HepG2 (cell line): ENCODE measurements at regions of chr15 and their contacts with region 1.

Region 1: GRCh38 chr15:61621146-61621545 is 392.0 kb upstream of the RORA start:
- DNase-seq: peak; percentile 6
- ATAC-seq: peak; percentile 82
- H3K4me3 ChIP-seq: no peak overlapping the region
- H3K27ac ChIP-seq: no peak overlapping the region
- H3K4me1 ChIP-seq: no peaks in the 10 kb centered on the region
- H3K27me3 ChIP-seq: peaks cover 0 to 2% of the 10 kb centered on the region in 2 experiments; a peak in 1 of 5 replicates
- CTCF ChIP-seq: peak; percentile 74
- EP300 ChIP-seq: no peak
- POLR2A ChIP-seq: no peak
- RAD21 ChIP-seq: peak; percentile 53; the same call in 1 of the 2 replicates

Region 2: DNA sequence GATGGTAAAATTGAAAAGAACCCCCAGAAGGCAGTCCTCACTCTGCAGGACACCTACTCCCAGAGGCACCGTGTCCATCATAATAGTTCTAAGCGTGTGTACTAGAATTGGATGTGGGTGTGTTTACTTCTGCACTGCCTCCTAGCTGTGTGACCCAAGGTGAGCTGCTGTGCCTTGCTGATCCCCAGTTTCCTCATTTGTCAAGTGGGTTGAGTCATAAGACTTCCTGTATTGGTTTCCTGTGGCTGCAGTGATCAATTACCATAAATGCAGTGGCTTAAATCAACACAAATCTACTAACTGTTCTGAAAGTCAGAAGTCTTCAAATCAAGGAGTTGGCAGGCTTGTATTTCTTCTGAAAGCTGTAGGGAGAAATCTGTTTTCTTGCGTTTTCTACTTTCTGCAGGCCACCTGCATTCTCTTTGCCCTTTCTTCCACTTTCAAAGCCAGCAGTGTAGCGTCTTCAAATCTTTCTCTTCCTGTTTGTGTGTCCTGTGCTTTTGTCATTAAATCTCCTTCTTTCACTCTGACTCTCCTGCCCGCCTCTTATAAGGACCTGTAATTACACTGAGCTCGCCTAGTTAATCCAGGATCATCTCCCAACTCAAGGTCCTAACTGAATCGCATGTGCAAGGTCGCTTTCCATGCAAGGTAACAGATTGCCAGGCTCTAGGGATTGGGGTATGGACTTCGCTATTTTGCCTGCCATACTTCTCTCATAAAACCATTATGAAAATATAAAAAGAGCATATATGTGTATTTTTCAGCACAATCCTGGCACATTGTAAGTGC is 451.0 kb before region 1 on chr15:
- CTCF ChIA-PET with region 1: interaction called, 10 read pairs
- POLR2A ChIA-PET with region 1: no interaction called
- in situ Hi-C with region 1: no loop called
- intact Hi-C with region 1: no loop called
- DNase-seq: no peak
- ATAC-seq: no peak
- H3K4me3 ChIP-seq: no peak overlapping the region
- H3K27ac ChIP-seq: no peak overlapping the region
- H3K4me1 ChIP-seq: no peaks in the 10 kb centered on the region
- H3K27me3 ChIP-seq: peaks cover 0 to under 1% of the 10 kb centered on the region in 2 experiments; a peak in 1 of 5 replicates
- CTCF ChIP-seq: no peak
- EP300 ChIP-seq: no peak
- POLR2A ChIP-seq: no peak
- RAD21 ChIP-seq: no peak

Region 3: DNA sequence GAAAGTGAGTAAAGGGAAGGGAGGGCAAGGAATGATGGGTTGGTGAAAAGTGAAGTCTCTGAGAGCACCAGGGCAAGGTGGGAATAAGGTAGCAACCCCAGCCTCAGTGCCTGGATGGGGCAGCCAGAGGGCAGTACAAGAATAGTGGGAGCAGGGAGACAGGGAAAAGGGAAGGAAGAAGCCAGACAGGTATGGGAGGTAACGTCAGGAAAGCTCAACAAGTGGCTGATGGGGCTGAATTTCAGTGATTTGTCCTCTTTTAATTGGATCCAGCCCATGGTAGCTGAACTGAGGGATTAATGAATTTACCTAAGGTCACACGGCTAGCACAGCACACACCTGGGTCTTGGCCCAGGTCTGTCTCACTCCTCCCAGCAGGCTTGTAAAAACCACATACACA is 404.6 kb before region 1 on chr15:
- CTCF ChIA-PET with region 1: no interaction called
- POLR2A ChIA-PET with region 1: no interaction called
- in situ Hi-C with region 1: no loop called
- intact Hi-C with region 1: loop called (anchors 10 kb)
- DNase-seq: no peak
- ATAC-seq: peak; percentile 34; the same call in 1 of the 3 replicates
- H3K4me3 ChIP-seq: no peak overlapping the region
- H3K27ac ChIP-seq: no peak overlapping the region
- H3K4me1 ChIP-seq: no peaks in the 10 kb centered on the region
- H3K27me3 ChIP-seq: peaks cover 0 to 9% of the 10 kb centered on the region in 2 experiments; a peak in 1 of 5 replicates
- CTCF ChIP-seq: peak; percentile 43
- EP300 ChIP-seq: no peak
- POLR2A ChIP-seq: no peak
- RAD21 ChIP-seq: no peak

Region 4: GRCh38 chr15:61584410-61584809 is 36.7 kb before region 1 on chr15:
- CTCF ChIA-PET with region 1: no interaction called
- POLR2A ChIA-PET with region 1: no interaction called
- in situ Hi-C with region 1: no loop called
- intact Hi-C with region 1: no loop called
- DNase-seq: no peak
- ATAC-seq: no peak
- H3K4me3 ChIP-seq: no peak overlapping the region
- H3K27ac ChIP-seq: no peak overlapping the region
- H3K4me1 ChIP-seq: no peaks in the 10 kb centered on the region
- H3K27me3 ChIP-seq: no peaks in the 10 kb centered on the region
- CTCF ChIP-seq: no peak
- EP300 ChIP-seq: no peak
- POLR2A ChIP-seq: no peak
- RAD21 ChIP-seq: no peak

Region 5: GRCh38 chr15:61653110-61653509 is 32.0 kb after region 1 on chr15:
- CTCF ChIA-PET with region 1: no interaction called
- POLR2A ChIA-PET with region 1: no interaction called
- in situ Hi-C with region 1: no loop called
- intact Hi-C with region 1: no loop called
- DNase-seq: no peak
- ATAC-seq: no peak
- H3K4me3 ChIP-seq: no peak overlapping the region
- H3K27ac ChIP-seq: no peak overlapping the region
- H3K4me1 ChIP-seq: no peaks in the 10 kb centered on the region
- H3K27me3 ChIP-seq: peaks cover 1 to 4% of the 10 kb centered on the region in 2 experiments; a peak in 3 of 5 replicates
- CTCF ChIP-seq: no peak
- EP300 ChIP-seq: no peak
- POLR2A ChIP-seq: no peak
- RAD21 ChIP-seq: no peak